HepG2 (cell line): ENCODE measurements at regions of chr19 and their contacts with region 1.

Region 1: GRCh38 chr19:38387550-38388348 is at the start of gene GGN:
- DNase-seq: peak; percentile 49
- ATAC-seq: peak; percentile 63
- H3K4me3 ChIP-seq: peak within 1 kb of the TSS; percentile 46 to 71 (median 63)
- H3K27ac ChIP-seq: no peak within 1 kb of the TSS
- H3K4me1 ChIP-seq: peaks cover 36% of the 10 kb centered on the region
- H3K27me3 ChIP-seq: peaks cover 2 to 20% of the 10 kb centered on the region in 2 experiments; a peak in 3 of 5 replicates
- CTCF ChIP-seq: no peak
- EP300 ChIP-seq: no peak
- POLR2A ChIP-seq: peak in 1 of 2 experiments; percentile 46; a peak in 2 of 4 replicates
- RAD21 ChIP-seq: no peak
- total RNA-seq, gene GGN: not detected in 2 replicates

Region 2: GRCh38 chr19:38224014-38224862 is 163.5 kb before region 1 on chr19 and contains the start of gene DPF1:
- CTCF ChIA-PET with region 1: no interaction called
- POLR2A ChIA-PET with region 1: no interaction called
- in situ Hi-C with region 1: no loop called
- intact Hi-C with region 1: no loop called
- DNase-seq: peak; percentile 78
- ATAC-seq: peak; percentile 96
- H3K4me3 ChIP-seq: peak within 1 kb of the TSS; percentile 62 to 86 (median 75)
- H3K27ac ChIP-seq: no peak within 1 kb of the TSS
- H3K4me1 ChIP-seq: peaks cover 17% of the 10 kb centered on the region
- H3K27me3 ChIP-seq: peaks cover 7 to 22% of the 10 kb centered on the region in 2 experiments; a peak in 4 of 5 replicates
- CTCF ChIP-seq: peak; percentile 51
- EP300 ChIP-seq: no peak
- POLR2A ChIP-seq: peak; percentile 42 to 49; a peak in 2 of 4 replicates
- RAD21 ChIP-seq: no peak
- total RNA-seq, gene DPF1: 1.7 and 3.2 TPM in 2 replicates

Region 3: DNA sequence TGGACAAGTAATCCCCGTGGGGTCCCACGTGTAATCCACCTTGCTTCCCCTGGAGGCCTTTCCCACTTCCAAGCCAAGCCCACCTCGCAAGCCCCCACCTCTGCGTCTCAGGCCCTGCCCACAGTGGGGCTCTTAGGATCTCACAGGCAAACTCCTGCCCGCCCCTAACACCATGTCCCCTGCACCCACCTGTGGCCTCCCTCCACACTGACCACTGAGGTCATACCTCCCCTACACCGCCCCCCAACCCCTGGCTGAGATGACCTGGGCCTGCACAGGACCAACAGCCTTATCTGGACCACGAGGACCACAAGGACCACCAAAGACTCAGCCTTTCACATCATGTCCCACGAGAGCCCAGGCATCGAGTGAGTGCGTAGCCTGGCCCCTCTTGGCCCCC is 20.0 kb before region 1 on chr19:
- CTCF ChIA-PET with region 1: no interaction called
- POLR2A ChIA-PET with region 1: no interaction called
- in situ Hi-C with region 1: no loop called
- intact Hi-C with region 1: no loop called
- DNase-seq: no peak
- ATAC-seq: no peak
- H3K4me3 ChIP-seq: no peak overlapping the region
- H3K27ac ChIP-seq: no peak overlapping the region
- H3K4me1 ChIP-seq: peaks cover 33% of the 10 kb centered on the region
- H3K27me3 ChIP-seq: peaks cover 0 to 6% of the 10 kb centered on the region in 2 experiments; a peak in 1 of 5 replicates
- CTCF ChIP-seq: no peak
- EP300 ChIP-seq: no peak
- POLR2A ChIP-seq: no peak
- RAD21 ChIP-seq: no peak

Region 4: DNA sequence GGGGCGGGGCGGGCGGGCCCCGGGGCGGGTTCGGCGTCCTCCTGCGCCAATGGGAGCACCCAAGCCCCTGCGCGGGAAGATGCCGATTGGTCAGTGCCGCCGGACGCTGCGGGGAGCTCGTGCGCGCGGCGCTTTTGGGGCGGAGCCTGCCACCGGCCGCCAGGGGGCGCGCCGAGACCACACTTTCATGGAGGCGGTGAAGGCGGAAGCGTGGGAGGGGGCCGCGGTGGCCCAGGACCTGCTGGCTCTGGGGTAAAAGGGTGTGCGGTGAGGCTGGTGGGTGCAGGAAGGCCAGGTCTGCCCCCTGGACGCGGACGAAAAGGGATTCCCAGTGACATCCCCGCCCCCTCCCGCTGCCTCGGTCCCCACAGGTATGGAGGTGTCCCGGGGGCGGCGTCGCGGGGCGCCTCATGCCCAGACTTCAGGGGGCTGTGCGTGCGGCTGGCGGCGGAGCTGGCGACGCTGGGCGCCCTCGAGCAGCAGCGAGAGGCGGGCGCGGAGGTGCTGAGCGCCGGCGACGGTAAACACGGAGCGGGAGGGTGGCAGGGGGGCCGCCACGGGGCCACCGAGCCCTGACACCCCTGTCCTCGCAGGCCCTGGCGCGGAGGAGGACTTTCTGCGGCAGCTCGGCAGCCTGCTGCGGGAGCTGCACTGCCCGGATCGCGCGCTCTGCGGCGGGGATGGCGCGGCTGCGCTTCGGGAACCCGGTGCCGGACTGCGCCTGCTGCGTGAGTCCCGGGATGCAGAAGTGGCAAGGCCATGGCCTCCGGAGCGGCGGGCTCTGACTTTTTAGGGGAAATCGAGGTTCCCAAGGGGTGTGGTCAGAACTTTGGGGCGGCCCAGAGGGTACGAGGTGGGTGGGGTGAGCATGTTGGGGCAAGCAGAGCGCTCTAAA is 15.5 kb after region 1 on chr19 and contains the start of gene FAM98C:
- CTCF ChIA-PET with region 1: no interaction called
- POLR2A ChIA-PET with region 1: interaction called, 28 read pairs
- in situ Hi-C with region 1: no loop called
- intact Hi-C with region 1: no loop called
- DNase-seq: peak; percentile 93
- ATAC-seq: peak; percentile 96
- H3K4me3 ChIP-seq: peak within 1 kb of the TSS; percentile 57 to 86 (median 80); a peak in 5 of 6 replicates
- H3K27ac ChIP-seq: peak within 1 kb of the TSS; percentile 55
- H3K4me1 ChIP-seq: no peaks in the 10 kb centered on the region
- H3K27me3 ChIP-seq: peaks cover 5 to 17% of the 10 kb centered on the region in 2 experiments; a peak in 3 of 5 replicates
- CTCF ChIP-seq: peak; percentile 97
- EP300 ChIP-seq: no peak
- POLR2A ChIP-seq: peak; percentile 58 to 62; a peak in 3 of 4 replicates
- RAD21 ChIP-seq: peak; percentile 94
- total RNA-seq, gene FAM98C: 7.4 and 10.0 TPM in 2 replicates

Region 5: DNA sequence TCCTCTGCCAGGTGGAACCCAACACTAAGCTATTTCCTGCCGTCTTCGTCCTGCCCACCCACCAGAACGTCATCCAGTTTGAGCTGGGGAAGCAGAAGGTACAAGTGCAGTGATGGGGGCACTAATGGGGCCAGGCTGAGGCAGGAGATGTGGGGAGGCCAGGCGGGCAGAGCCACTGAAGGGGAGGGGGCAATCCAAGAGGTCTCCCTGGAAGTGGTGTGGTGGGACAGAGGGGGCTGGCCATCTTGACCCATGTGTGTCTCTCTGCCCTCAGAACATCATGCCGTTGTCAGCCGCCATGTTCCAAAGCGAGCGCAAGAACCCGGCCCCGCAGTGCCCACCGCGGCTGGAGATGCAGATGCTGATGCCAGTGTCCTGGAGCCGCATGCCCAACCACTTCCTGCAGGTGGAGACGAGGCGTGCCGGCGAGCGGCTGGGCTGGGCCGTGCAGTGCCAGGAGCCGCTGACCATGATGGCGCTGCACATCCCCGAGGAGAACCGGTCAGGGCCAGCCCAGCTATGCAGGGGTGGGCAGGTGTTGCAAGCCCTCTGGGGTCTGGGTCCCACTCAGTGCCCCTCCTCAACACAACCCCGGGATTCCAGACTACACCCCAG is 95.4 kb after region 1 on chr19:
- CTCF ChIA-PET with region 1: no interaction called
- POLR2A ChIA-PET with region 1: no interaction called
- in situ Hi-C with region 1: no loop called
- intact Hi-C with region 1: no loop called
- DNase-seq: no peak
- ATAC-seq: no peak
- H3K4me3 ChIP-seq: no peak overlapping the region
- H3K27ac ChIP-seq: no peak overlapping the region
- H3K4me1 ChIP-seq: no peaks in the 10 kb centered on the region
- H3K27me3 ChIP-seq: peaks cover 0 to 13% of the 10 kb centered on the region in 2 experiments; a peak in 3 of 5 replicates
- CTCF ChIP-seq: no peak
- EP300 ChIP-seq: no peak
- POLR2A ChIP-seq: no peak
- RAD21 ChIP-seq: no peak